PC-3 (cell line): ENCODE measurements at regions of chr12 and their contacts with region 1.

Region 1: GRCh38 chr12:6614513-6615172 is 7.5 kb upstream of the CHD4 start:
- DNase-seq: no peak
- ATAC-seq: no peak
- H3K4me3 ChIP-seq: no peak overlapping the region
- H3K27ac ChIP-seq: peak overlapping the region; percentile 18; the same call in 1 of the 2 replicates
- H3K4me1 ChIP-seq: peaks cover 15% of the 10 kb centered on the region
- H3K27me3 ChIP-seq: no peaks in the 10 kb centered on the region
- CTCF ChIP-seq: 0 out of 2 replicates have a peak, but pooled peaks have one; percentile 10

Region 2: GRCh38 chr12:6592087-6592486 is 22.6 kb before region 1 on chr12:
- CTCF ChIA-PET with region 1: no interaction called
- POLR2A ChIA-PET with region 1: no interaction called
- intact Hi-C with region 1: no loop called
- DNase-seq: no peak
- ATAC-seq: no peak
- H3K4me3 ChIP-seq: no peak overlapping the region
- H3K27ac ChIP-seq: no peak overlapping the region
- H3K4me1 ChIP-seq: no peaks in the 10 kb centered on the region
- H3K27me3 ChIP-seq: no peaks in the 10 kb centered on the region
- CTCF ChIP-seq: no peak

Region 3: GRCh38 chr12:6662906-6663742 is 48.5 kb after region 1 on chr12 and contains the start of gene ING4:
- CTCF ChIA-PET with region 1: interaction called, 8 read pairs
- POLR2A ChIA-PET with region 1: no interaction called
- intact Hi-C with region 1: loop called (anchors 5 kb)
- DNase-seq: peak; percentile 97
- ATAC-seq: peak; percentile 99
- H3K4me3 ChIP-seq: peak within 1 kb of the TSS; percentile 75
- H3K27ac ChIP-seq: peak within 1 kb of the TSS; percentile 45
- H3K4me1 ChIP-seq: peaks cover 8% of the 10 kb centered on the region; the same call in 1 of the 2 replicates
- H3K27me3 ChIP-seq: no peaks in the 10 kb centered on the region
- CTCF ChIP-seq: no peak
- total RNA-seq, gene ING4: 17.0 and 23.8 TPM in 2 replicates

Region 4: GRCh38 chr12:6697584-6698351 is 83.1 kb after region 1 on chr12:
- CTCF ChIA-PET with region 1: no interaction called
- POLR2A ChIA-PET with region 1: no interaction called
- intact Hi-C with region 1: loop called (anchors 5 kb)
- DNase-seq: peak; percentile 60
- ATAC-seq: peak; percentile 89
- H3K4me3 ChIP-seq: no peak overlapping the region
- H3K27ac ChIP-seq: no peak overlapping the region
- H3K4me1 ChIP-seq: no peaks in the 10 kb centered on the region
- H3K27me3 ChIP-seq: peaks cover 33% of the 10 kb centered on the region
- CTCF ChIP-seq: peak; percentile 67